ENCODE measurements at regions of chr10 and their contacts with region 1.

Region 1: GRCh38 chr10:23994479-23995046 is 214.4 kb upstream of the KIAA1217 start:
- DNase-seq: peak; percentile 75
- H3K4me3 ChIP-seq: no peak overlapping the region
- H3K27ac ChIP-seq: no peak overlapping the region
- H3K4me1 ChIP-seq: no peaks in the 10 kb centered on the region
- H3K27me3 ChIP-seq: no peaks in the 10 kb centered on the region
- CTCF ChIP-seq: peak; percentile 68 to 91 (median 87)
- POLR2A ChIP-seq: no peak

Region 2: GRCh38 chr10:24197263-24197662 is 202.7 kb after region 1 on chr10:
- intact Hi-C with region 1: loop called (anchors 2 kb)
- DNase-seq: no peak
- H3K4me3 ChIP-seq: no peak overlapping the region
- H3K27ac ChIP-seq: no peak overlapping the region
- H3K4me1 ChIP-seq: no peaks in the 10 kb centered on the region
- H3K27me3 ChIP-seq: no peaks in the 10 kb centered on the region
- CTCF ChIP-seq: no peak
- POLR2A ChIP-seq: no peak

Region 3: GRCh38 chr10:24360282-24361127 is 365.9 kb after region 1 on chr10:
- intact Hi-C with region 1: loop called (anchors 2 kb)
- DNase-seq: peak; percentile 78
- H3K4me3 ChIP-seq: no peak overlapping the region
- H3K27ac ChIP-seq: peak overlapping the region in 1 of 2 donors; percentile 25
- H3K4me1 ChIP-seq: no peaks in the 10 kb centered on the region
- H3K27me3 ChIP-seq: no peaks in the 10 kb centered on the region
- CTCF ChIP-seq: peak; percentile 17 to 81 (median 73)
- POLR2A ChIP-seq: no peak

Region 4: GRCh38 chr10:24503461-24504320 is 509.1 kb after region 1 on chr10:
- intact Hi-C with region 1: loop called (anchors 5 kb)
- DNase-seq: peak; percentile 46
- H3K4me3 ChIP-seq: no peak overlapping the region
- H3K27ac ChIP-seq: peak overlapping the region; percentile 7
- H3K4me1 ChIP-seq: no peaks in the 10 kb centered on the region
- H3K27me3 ChIP-seq: no peaks in the 10 kb centered on the region
- CTCF ChIP-seq: peak; percentile 18 to 68 (median 61)
- POLR2A ChIP-seq: no peak

Region 5: DNA sequence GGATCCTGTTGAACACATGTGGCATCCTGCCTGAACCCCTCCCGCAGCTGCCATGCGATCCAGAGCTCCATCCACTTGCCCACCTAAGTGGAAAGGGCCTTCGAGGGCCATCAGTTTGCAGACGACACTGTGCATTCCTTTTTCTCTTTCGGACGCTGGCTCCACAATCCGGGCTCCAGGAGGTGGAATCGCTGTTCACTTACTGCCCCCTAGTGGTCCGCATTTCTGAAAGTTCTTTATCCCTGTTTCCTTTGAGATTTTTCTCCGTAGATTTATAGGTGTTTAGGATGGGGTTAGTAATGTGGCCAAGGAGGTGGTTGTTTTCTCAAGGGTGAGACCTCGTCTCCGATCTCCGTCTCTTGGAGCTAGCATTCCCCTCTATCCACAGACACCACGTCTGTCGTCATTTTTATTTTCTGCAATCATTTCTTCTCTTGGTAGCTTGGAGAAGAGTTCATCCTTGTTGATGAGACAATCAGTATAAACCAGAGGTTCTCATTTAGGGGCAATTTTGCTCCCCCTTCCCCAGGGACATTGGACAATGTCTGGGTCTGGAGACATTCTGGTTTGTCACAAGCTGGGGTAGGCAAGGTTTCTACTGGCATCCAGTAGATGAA is 524.5 kb after region 1 on chr10:
- intact Hi-C with region 1: loop called (anchors 5 kb)
- DNase-seq: peak; percentile 72
- H3K4me3 ChIP-seq: no peak overlapping the region
- H3K27ac ChIP-seq: peak overlapping the region; percentile 24 to 25
- H3K4me1 ChIP-seq: no peaks in the 10 kb centered on the region
- H3K27me3 ChIP-seq: no peaks in the 10 kb centered on the region
- CTCF ChIP-seq: peak; percentile 53 to 85 (median 72)
- POLR2A ChIP-seq: no peak

Measured in prostate gland (tissue), 2 donors.